ENCODE measurements at regions of chr14 and their contacts with region 1.

Region 1: GRCh38 chr14:39015360-39015961 is 87.6 kb downstream of the SEC23A start:
- DNase-seq: no peak
- H3K4me3 ChIP-seq: no peak overlapping the region
- H3K27ac ChIP-seq: no peak overlapping the region
- H3K27me3 ChIP-seq: no peaks in the 10 kb centered on the region
- CTCF ChIP-seq: peak; percentile 87

Region 2: GRCh38 chr14:38721822-38722431 is 293.5 kb before region 1 on chr14:
- CTCF ChIA-PET with region 1: interaction called, 98 read pairs
- POLR2A ChIA-PET with region 1: no interaction called
- DNase-seq: no peak
- H3K4me3 ChIP-seq: no peak overlapping the region
- H3K27ac ChIP-seq: no peak overlapping the region
- H3K27me3 ChIP-seq: no peaks in the 10 kb centered on the region
- CTCF ChIP-seq: peak; percentile 76

Region 3: DNA sequence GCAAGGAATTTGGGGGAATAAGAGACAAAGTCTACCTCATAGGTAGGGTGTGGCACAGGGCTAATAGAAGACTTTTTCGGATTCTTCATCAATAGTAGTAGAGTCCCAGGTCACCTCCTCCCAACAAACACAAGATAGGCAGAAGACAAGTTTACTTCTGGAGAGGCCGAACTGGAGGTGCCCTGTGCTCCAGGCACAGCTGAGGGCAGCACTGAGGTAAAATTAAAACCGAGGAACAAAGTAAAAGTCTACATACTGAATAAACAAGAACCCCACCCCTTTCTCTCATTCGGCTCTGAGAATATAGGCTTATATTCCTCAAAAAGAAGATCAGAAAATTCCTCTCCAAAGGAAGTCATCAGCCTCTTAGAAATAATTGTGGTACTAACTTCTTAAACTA is 74.0 kb before region 1 on chr14:
- CTCF ChIA-PET with region 1: interaction called, 12 read pairs
- POLR2A ChIA-PET with region 1: no interaction called
- DNase-seq: no peak
- H3K4me3 ChIP-seq: no peak overlapping the region
- H3K27ac ChIP-seq: no peak overlapping the region
- H3K27me3 ChIP-seq: no peaks in the 10 kb centered on the region
- CTCF ChIP-seq: no peak

Region 4: GRCh38 chr14:38958594-38958993 is 56.9 kb before region 1 on chr14:
- CTCF ChIA-PET with region 1: no interaction called
- POLR2A ChIA-PET with region 1: no interaction called
- DNase-seq: no peak
- H3K4me3 ChIP-seq: no peak overlapping the region
- H3K27ac ChIP-seq: no peak overlapping the region
- H3K27me3 ChIP-seq: no peaks in the 10 kb centered on the region
- CTCF ChIP-seq: no peak

Region 5: GRCh38 chr14:39005044-39005880 is 10.2 kb before region 1 on chr14:
- CTCF ChIA-PET with region 1: interaction called, 33 read pairs
- POLR2A ChIA-PET with region 1: no interaction called
- DNase-seq: peak; percentile 53
- H3K4me3 ChIP-seq: no peak overlapping the region
- H3K27ac ChIP-seq: peak overlapping the region; percentile 68
- H3K27me3 ChIP-seq: no peaks in the 10 kb centered on the region
- CTCF ChIP-seq: no peak

Region 6: DNA sequence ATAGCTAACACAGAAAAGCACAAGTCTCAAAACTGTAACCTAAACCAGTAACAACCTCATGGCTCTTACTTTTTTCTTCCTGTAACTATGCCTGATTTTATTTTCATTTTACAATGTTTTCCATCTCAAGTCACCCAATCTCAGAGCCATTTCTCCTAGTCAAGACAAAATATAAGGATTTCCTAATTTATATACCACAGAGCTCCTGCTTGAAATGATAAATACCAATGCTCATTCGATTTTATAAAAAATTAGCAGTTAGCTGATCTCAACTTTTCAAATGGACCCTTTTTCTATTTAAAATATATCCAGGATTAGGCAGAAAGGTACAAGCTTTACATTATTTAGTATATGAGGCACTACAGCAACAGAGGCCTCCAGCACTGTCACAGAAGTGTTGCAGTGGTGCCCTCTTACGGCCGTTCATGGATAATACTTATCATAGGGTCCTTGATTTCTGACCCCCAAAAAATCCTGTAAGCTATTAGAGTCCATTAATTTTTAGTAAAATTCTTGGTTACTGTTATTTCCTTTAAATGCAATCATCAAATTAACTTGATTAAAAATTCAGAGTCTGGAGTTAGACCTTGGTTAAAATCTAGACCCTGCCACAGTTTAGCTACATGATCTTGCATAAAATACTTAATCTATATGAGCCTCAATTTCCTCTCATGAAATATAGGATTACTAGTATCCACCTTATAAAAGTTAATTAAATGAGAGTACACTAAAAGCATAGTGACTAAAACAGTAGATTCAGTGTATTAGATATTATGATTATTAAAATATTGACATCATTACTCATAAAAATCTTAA is 19.2 kb after region 1 on chr14:
- CTCF ChIA-PET with region 1: interaction called, 20 read pairs
- POLR2A ChIA-PET with region 1: no interaction called
- DNase-seq: no peak
- H3K4me3 ChIP-seq: no peak overlapping the region
- H3K27ac ChIP-seq: no peak overlapping the region
- H3K27me3 ChIP-seq: no peaks in the 10 kb centered on the region
- CTCF ChIP-seq: peak; percentile 44

Measured in AG04450 (cell line).